Activated B cell treated with CpG ODN at 0.5 μM for 24 hours (primary cell): ENCODE measurements at regions of chr6 and their contacts with region 1.

Region 1: GRCh38 chr6:56902641-56903464 is 52.1 kb upstream of the BEND6 start:
- DNase-seq: no peak
- ATAC-seq: no peak
- H3K4me3 Mint-ChIP-seq: no peak overlapping the region
- H3K27ac Mint-ChIP-seq: no peak overlapping the region
- H3K4me1 Mint-ChIP-seq: no peaks in the 10 kb centered on the region
- H3K27me3 Mint-ChIP-seq: peaks cover 6% of the 10 kb centered on the region
- CTCF ChIP-seq: peak; percentile 7

Region 2: GRCh38 chr6:56072856-56073255 is 830.0 kb before region 1 on chr6:
- CTCF ChIA-PET with region 1: no interaction called
- POLR2A ChIA-PET with region 1: no interaction called
- intact Hi-C with region 1: no loop called
- DNase-seq: no peak
- ATAC-seq: no peak
- H3K4me3 Mint-ChIP-seq: no peak overlapping the region
- H3K27ac Mint-ChIP-seq: no peak overlapping the region
- H3K4me1 Mint-ChIP-seq: no peaks in the 10 kb centered on the region
- H3K27me3 Mint-ChIP-seq: no peaks in the 10 kb centered on the region
- CTCF ChIP-seq: no peak

Region 3: GRCh38 chr6:56890683-56891429 is 12.0 kb before region 1 on chr6:
- CTCF ChIA-PET with region 1: interaction called, 16 read pairs
- POLR2A ChIA-PET with region 1: no interaction called
- intact Hi-C with region 1: no loop called
- DNase-seq: no peak
- ATAC-seq: no peak
- H3K4me3 Mint-ChIP-seq: no peak overlapping the region
- H3K27ac Mint-ChIP-seq: no peak overlapping the region
- H3K4me1 Mint-ChIP-seq: no peaks in the 10 kb centered on the region
- H3K27me3 Mint-ChIP-seq: no peaks in the 10 kb centered on the region
- CTCF ChIP-seq: no peak

Region 4: DNA sequence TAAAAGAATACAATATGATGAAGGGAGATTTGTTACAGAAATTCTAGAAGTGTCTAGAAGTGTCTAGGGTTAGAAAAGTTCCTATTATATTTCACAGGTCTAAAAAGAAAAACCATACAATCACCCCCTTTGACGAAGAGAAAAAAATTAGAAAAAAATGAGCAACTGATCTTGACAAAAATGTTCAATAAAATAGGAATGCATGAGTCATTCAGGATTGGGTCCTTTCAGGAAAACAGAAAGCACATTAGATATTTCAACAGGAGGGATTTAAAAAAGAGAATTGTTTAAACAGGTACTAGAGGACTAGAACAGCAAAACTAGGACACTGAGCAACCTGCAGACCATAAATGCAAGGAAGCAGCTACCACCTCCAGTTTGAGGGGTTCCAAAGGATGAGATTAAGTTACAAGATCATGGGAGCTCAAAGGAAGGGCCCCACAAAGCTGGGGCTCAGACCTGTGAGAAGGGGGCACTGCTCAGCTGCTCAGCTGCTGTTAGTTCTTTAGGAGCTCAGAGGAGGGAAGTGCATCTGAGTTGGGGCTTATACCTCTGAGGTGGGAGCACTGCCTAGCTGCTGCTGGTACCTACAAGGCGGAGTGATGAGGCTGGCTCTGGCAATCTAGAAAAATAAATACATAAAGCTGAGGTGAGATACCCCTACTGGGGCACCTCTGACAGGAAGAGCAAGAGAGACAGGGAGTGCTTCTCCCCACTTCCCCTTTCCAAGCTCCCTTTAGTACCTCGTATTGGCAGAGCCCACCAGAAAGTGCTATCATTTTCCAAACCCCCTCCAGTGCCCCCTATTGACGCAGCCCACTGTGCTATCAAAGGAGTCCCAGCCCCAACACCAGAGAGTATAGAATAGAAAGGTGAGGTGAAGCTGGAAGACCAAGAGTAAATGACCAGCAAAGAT is 24.9 kb after region 1 on chr6:
- CTCF ChIA-PET with region 1: no interaction called
- POLR2A ChIA-PET with region 1: no interaction called
- intact Hi-C with region 1: no loop called
- DNase-seq: no peak
- ATAC-seq: no peak
- H3K4me3 Mint-ChIP-seq: no peak overlapping the region
- H3K27ac Mint-ChIP-seq: no peak overlapping the region
- H3K4me1 Mint-ChIP-seq: no peaks in the 10 kb centered on the region
- H3K27me3 Mint-ChIP-seq: peaks cover 6% of the 10 kb centered on the region
- CTCF ChIP-seq: no peak

Region 5: GRCh38 chr6:57021086-57021720 is 118.3 kb after region 1 on chr6:
- CTCF ChIA-PET with region 1: interaction called, 5 read pairs
- POLR2A ChIA-PET with region 1: no interaction called
- intact Hi-C with region 1: loop called (anchors 1 kb)
- DNase-seq: no peak
- ATAC-seq: peak; percentile 40
- H3K4me3 Mint-ChIP-seq: no peak overlapping the region
- H3K27ac Mint-ChIP-seq: no peak overlapping the region
- H3K4me1 Mint-ChIP-seq: no peaks in the 10 kb centered on the region
- H3K27me3 Mint-ChIP-seq: peaks cover 3% of the 10 kb centered on the region
- CTCF ChIP-seq: no peak

Region 6: GRCh38 chr6:57172136-57173055 is 269.5 kb after region 1 on chr6 and contains the start of gene BAG2:
- CTCF ChIA-PET with region 1: no interaction called
- POLR2A ChIA-PET with region 1: no interaction called
- intact Hi-C with region 1: loop called (anchors 2 kb)
- DNase-seq: peak; percentile 86
- ATAC-seq: peak; percentile 87
- H3K4me3 Mint-ChIP-seq: peak within 1 kb of the TSS; percentile 92
- H3K27ac Mint-ChIP-seq: peak within 1 kb of the TSS; percentile 92
- H3K4me1 Mint-ChIP-seq: peaks cover 26% of the 10 kb centered on the region
- H3K27me3 Mint-ChIP-seq: no peaks in the 10 kb centered on the region
- CTCF ChIP-seq: no peak
- total RNA-seq, gene BAG2: 3.9 and 4.3 TPM in 2 replicates

Region 7: GRCh38 chr6:57324538-57324937 is 421.7 kb after region 1 on chr6:
- CTCF ChIA-PET with region 1: interaction called, 36 read pairs
- POLR2A ChIA-PET with region 1: no interaction called
- intact Hi-C with region 1: loop called (anchors 1 kb)
- DNase-seq: no peak
- ATAC-seq: no peak
- H3K4me3 Mint-ChIP-seq: no peak overlapping the region
- H3K27ac Mint-ChIP-seq: no peak overlapping the region
- H3K4me1 Mint-ChIP-seq: peaks cover under 1% of the 10 kb centered on the region
- H3K27me3 Mint-ChIP-seq: no peaks in the 10 kb centered on the region
- CTCF ChIP-seq: no peak